ENCODE measurements at regions of chr17 and their contacts with region 1.

Region 1: GRCh38 chr17:3683054-3683511 is 12.9 kb downstream of the P2RX5 start:
- DNase-seq: peak; percentile 84
- CTCF ChIP-seq: peak; percentile 96

Region 2: DNA sequence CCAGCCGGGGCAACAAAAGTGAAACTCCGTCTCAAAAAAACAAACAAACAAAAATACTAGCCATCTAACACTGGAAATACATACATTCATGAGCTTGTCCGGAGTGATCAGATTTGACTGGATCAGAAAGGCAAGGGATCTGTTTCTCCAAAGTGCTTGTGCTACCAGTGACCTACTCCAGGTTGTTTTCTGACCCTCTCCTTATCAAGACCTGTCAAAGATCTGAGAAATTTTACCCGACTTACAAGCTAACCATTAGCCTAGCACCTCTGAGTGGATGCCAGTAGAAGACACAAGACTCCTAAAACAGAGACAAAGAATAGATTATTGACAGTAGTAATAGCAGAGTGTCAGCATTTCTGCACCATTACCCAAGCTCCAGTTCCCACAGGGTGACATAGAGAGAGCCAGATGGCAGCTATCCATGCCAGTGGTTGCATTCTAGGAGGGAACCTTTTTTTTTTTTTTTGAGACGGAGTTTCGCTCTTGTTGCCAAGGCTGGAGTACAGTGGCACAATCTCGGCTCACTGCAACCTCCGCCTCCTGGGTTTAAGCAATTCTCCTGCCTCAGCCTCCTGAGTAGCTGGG is 197.5 kb before region 1 on chr17:
- CTCF ChIA-PET with region 1: no interaction called
- POLR2A ChIA-PET with region 1: no interaction called
- DNase-seq: no peak
- CTCF ChIP-seq: no peak

Region 3: GRCh38 chr17:3732210-3732621 is 49.1 kb after region 1 on chr17:
- CTCF ChIA-PET with region 1: interaction called, 25 read pairs
- POLR2A ChIA-PET with region 1: no interaction called
- DNase-seq: peak; percentile 80
- CTCF ChIP-seq: peak; percentile 82

Region 4: GRCh38 chr17:3794557-3795389 is 111.7 kb after region 1 on chr17:
- CTCF ChIA-PET with region 1: no interaction called
- POLR2A ChIA-PET with region 1: no interaction called
- DNase-seq: no peak
- CTCF ChIP-seq: no peak

Region 5: DNA sequence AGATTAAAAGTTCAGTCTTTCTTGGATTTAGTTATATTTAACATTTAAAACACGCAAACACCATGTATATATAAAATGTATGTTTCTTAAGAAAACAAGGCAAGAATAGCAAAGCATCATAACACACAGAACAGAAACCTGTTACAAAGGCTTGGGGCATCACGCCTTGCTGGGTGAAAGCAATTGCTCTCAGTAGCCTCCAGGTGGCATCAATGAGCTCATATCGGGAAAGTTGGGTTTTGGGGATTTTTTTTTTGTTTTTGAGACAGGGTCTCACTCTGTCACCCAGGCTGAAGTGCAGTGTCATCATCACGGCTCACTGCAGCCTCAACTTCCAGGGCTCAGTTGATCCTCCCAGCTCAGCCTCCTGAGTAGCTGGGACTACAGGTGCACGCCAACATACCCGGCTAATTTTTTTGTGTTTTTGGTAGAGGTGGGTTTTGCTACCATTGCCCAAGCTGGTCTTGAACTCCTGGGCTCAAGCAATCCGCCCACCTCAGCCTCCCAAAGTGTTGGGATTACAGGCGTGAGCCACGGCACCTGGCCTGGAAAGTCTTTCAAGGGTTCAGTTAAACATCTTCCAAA is 516.8 kb after region 1 on chr17:
- CTCF ChIA-PET with region 1: no interaction called
- POLR2A ChIA-PET with region 1: no interaction called
- DNase-seq: peak; percentile 76
- CTCF ChIP-seq: peak; percentile 65

Measured in GM10248 (cell line).